ENCODE measurements at regions of chr18 and their contacts with region 1.

Region 1: GRCh38 chr18:22170421-22171262 is 1.3 kb downstream of the GATA6 start:
- DNase-seq: peak in 2 of 4 donors; percentile 41 to 82
- ATAC-seq: no peak
- H3K4me3 ChIP-seq: peak overlapping the region; percentile 57 to 66
- H3K27ac ChIP-seq: peak overlapping the region; percentile 91 to 97
- H3K4me1 ChIP-seq: peaks cover 0 to 21% of the 10 kb centered on the region in 2 donors
- H3K27me3 ChIP-seq: peaks cover 35 to 99% of the 10 kb centered on the region in 2 donors
- CTCF ChIP-seq: no peak

Region 2: DNA sequence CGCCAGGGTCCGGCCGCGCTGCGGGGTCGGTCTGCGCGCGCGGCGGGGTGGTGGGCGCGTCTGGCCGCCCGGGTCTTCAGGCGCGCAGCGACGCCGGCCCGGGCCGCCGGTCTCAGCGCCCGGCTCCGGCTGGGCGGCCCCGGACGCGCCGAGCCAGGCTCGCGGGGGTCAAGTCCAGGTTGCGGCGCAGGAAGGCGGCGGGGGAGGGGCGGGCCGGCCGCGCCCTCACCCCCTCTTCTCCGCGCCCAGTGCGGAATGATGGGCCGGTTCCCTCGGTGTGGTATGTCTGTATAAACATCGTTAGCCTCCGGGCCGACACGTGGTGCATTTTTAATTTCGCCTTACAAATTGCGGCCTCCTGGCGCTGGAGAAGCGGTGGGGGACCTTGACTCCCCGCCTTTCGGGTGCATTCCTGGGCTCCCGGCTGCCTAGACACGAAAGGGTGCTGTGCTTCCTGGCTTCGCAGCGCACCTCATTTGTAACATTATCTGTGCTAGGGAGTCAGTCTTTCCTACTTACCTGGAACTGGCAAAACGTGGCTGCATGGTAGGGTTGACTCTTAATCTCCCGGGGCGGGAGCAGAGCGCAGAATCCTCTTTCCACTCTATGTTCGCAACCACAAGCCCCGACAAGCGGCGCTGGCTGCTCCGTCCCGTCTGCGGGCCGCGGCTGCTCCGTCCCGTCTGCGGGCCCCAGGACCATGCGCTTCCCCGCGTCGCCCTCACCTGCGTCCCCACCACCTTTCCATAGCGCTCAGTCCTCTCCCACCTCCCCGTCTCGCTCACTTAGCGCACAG is 178.1 kb after region 1 on chr18:
- intact Hi-C with region 1: loop called in 1 of 2 experiments (anchors 10 kb)
- DNase-seq: peak; percentile 57 to 82 (median 59)
- ATAC-seq: peak; percentile 76
- H3K4me3 ChIP-seq: peak overlapping the region; percentile 32 to 33
- H3K27ac ChIP-seq: peak overlapping the region; percentile 75 to 77
- H3K4me1 ChIP-seq: peaks cover 20 to 40% of the 10 kb centered on the region in 2 donors
- H3K27me3 ChIP-seq: peaks cover 0 to 42% of the 10 kb centered on the region in 2 donors
- CTCF ChIP-seq: no peak

Region 3: DNA sequence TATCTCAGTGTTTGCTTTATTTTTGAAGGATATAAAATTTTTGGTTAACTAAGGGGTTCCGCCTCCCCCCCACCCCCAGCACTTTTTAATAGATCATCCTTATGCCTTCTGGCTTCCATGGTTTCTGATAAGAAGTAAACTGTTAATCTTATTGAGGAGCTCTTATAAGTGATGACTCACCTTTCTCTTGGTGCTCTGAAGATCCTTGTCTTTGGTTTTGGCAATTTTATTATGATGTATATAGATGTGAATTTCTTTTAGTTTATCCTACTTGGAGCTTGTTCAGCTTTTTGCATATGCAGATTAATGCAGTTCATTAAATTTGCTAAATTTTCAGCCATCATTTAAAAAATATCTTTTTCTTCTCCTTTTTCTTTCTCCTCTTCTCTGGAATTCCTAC is 338.8 kb after region 1 on chr18:
- intact Hi-C with region 1: no loop called
- DNase-seq: no peak
- ATAC-seq: no peak
- H3K4me3 ChIP-seq: no peak overlapping the region
- H3K27ac ChIP-seq: no peak overlapping the region
- H3K4me1 ChIP-seq: peaks cover 0 to 6% of the 10 kb centered on the region in 2 donors
- H3K27me3 ChIP-seq: no peaks in the 10 kb centered on the region
- CTCF ChIP-seq: no peak

Region 4: DNA sequence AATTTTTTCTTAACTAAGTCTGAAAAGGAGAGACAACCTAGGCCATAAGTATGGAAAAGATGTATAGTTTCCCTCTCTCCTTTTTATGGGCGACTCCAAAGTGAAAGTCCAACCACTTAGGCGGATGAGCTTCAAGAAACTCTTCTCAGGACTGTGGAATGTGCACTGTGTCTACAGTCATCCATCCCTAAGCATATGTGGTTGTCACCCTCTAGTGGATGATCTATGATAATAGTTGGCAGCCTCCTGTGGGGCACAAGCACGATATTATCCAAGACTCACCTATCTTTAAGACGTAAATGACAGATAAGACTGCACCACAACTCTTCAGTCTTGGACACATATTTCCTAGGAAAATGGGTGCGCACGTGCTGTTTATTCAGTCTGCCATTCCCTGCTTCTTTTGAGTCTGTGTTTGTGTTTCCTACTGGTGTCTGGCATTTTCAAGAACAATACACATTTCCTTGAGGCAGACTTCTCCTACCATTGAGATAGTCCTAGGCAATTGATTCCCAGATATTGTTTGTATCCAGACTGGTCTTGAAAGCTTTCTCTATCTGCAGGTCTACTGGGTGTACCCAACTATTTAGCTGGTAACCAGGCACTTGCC is 392.6 kb after region 1 on chr18:
- intact Hi-C with region 1: loop called in 1 of 2 experiments (anchors 10 kb)
- DNase-seq: peak in 2 of 4 donors; percentile 74 to 85
- ATAC-seq: peak; percentile 84
- H3K4me3 ChIP-seq: no peak overlapping the region
- H3K27ac ChIP-seq: peak overlapping the region in 1 of 2 donors; percentile 8
- H3K4me1 ChIP-seq: peaks cover 7 to 19% of the 10 kb centered on the region in 2 donors
- H3K27me3 ChIP-seq: peaks cover 0 to 38% of the 10 kb centered on the region in 2 donors
- CTCF ChIP-seq: peak; percentile 59 to 64